Heart left ventricle (tissue), 16 donors: ENCODE measurements at regions of chr6 and their contacts with region 1.

Region 1: GRCh38 chr6:119349323-119350042 is at the start of gene MAN1A1:
- DNase-seq: peak; percentile 90 to 96 (median 93)
- ATAC-seq: peak; percentile 94 to 98 (median 96)
- H3K4me3 ChIP-seq: peak within 1 kb of the TSS; percentile 77 to 99 (median 94)
- H3K27ac ChIP-seq: peak within 1 kb of the TSS; percentile 89 to 99 (median 96)
- H3K4me1 ChIP-seq: peaks cover 0 to 72% (median 17%) of the 10 kb centered on the region in 12 donors
- H3K27me3 ChIP-seq: no peaks in the 10 kb centered on the region
- CTCF ChIP-seq: peak in 3 of 12 donors; percentile 7 to 30 (median 22)
- POLR2A ChIP-seq: peak; percentile 72 to 98
- total RNA-seq, gene MAN1A1: 7.0 to 30.6 (median 20.6) TPM

Region 2: DNA sequence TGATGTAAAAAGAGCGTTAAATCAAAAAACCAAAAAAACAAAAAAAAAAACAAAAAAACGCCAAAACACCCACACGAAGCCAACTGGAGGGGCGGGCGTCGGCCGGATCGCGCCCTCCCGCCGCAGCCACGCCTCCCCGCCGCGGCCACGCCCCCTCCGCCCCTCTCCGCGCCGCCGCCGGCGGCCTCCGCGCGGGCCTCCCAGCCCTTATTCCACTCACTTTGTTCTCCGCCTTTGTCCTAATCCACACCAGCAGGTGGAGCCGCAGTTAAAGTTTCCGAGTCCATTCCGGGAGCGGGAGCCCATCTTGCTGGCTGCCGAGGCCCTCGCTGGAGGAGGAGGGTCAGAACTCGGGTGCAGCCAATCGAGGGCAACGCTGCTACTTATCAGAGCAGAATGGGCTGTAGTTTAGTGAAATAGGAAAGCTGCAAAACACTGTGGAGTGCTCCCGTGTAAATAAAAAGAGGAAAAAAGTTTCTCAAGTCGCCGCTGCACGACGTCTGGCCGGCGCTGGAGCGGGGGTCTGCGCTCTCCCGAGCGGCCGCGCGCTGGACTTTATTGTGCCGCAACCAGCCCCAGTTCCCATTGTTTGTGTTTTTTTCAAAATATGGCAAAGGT is 455.6 kb before region 1 on chr6 and contains the start of gene ASF1A:
- intact Hi-C with region 1: loop called in 1 of 10 experiments (anchors 10 kb)
- DNase-seq: peak; percentile 96 to 98 (median 98)
- ATAC-seq: peak; percentile 93 to 97 (median 95)
- H3K4me3 ChIP-seq: peak within 1 kb of the TSS; percentile 73 to 99 (median 90)
- H3K27ac ChIP-seq: peak within 1 kb of the TSS; percentile 86 to 98 (median 94)
- H3K4me1 ChIP-seq: peaks cover 0 to 59% (median 27%) of the 10 kb centered on the region in 12 donors
- H3K27me3 ChIP-seq: no peaks in the 10 kb centered on the region
- CTCF ChIP-seq: peak; percentile 34 to 81 (median 56)
- POLR2A ChIP-seq: peak; percentile 48 to 76
- total RNA-seq, gene ASF1A: 9.8 to 28.9 (median 22.1) TPM

Region 3: GRCh38 chr6:119158057-119158848 is 191.2 kb before region 1 on chr6:
- intact Hi-C with region 1: loop called in 2 of 10 experiments (anchors 5 to 10 kb)
- DNase-seq: peak; percentile 45 to 75 (median 64)
- ATAC-seq: peak; percentile 59 to 95 (median 89)
- H3K4me3 ChIP-seq: no peak overlapping the region
- H3K27ac ChIP-seq: peak overlapping the region in 4 of 12 donors; percentile 4 to 59 (median 36)
- H3K4me1 ChIP-seq: peaks cover 0 to 11% (median 0%) of the 10 kb centered on the region in 12 donors
- H3K27me3 ChIP-seq: no peaks in the 10 kb centered on the region
- CTCF ChIP-seq: no peak
- POLR2A ChIP-seq: no peak

Region 4: GRCh38 chr6:119442776-119443184 is 93.3 kb after region 1 on chr6:
- intact Hi-C with region 1: loop called in 1 of 10 experiments (anchors 10 kb)
- DNase-seq: peak in 3 of 5 donors; percentile 20 to 39 (median 23)
- ATAC-seq: peak; percentile 16 to 82 (median 55)
- H3K4me3 ChIP-seq: no peak overlapping the region
- H3K27ac ChIP-seq: no peak overlapping the region
- H3K4me1 ChIP-seq: peaks cover 0 to 54% (median 7%) of the 10 kb centered on the region in 12 donors
- H3K27me3 ChIP-seq: no peaks in the 10 kb centered on the region
- CTCF ChIP-seq: no peak
- POLR2A ChIP-seq: no peak

Region 5: GRCh38 chr6:119978274-119978889 is 628.9 kb after region 1 on chr6:
- intact Hi-C with region 1: loop called in 1 of 10 experiments (anchors 5 kb)
- DNase-seq: no peak
- ATAC-seq: no peak
- H3K4me3 ChIP-seq: no peak overlapping the region
- H3K27ac ChIP-seq: no peak overlapping the region
- H3K4me1 ChIP-seq: no peaks in the 10 kb centered on the region
- H3K27me3 ChIP-seq: no peaks in the 10 kb centered on the region
- CTCF ChIP-seq: peak in 11 of 12 donors; percentile 12 to 54 (median 34)
- POLR2A ChIP-seq: no peak